H1 (cell line): ENCODE measurements at regions of chr17 and their contacts with region 1.

Region 1: GRCh38 chr17:49997791-49998703 is 3.0 kb upstream of the DLX3 start:
- DNase-seq: peak; percentile 58 to 91
- H3K4me3 ChIP-seq: no peak overlapping the region
- H3K27ac ChIP-seq: no peak overlapping the region
- H3K4me1 ChIP-seq: peaks cover 3 to 29% (median 11%) of the 10 kb centered on the region in 4 experiments; a peak in 6 of 7 replicates
- H3K27me3 ChIP-seq: peaks cover 32 to 66% (median 52%) of the 10 kb centered on the region in 4 experiments
- CTCF ChIP-seq: peak; percentile 72 to 94 (median 92)
- EP300 ChIP-seq: no peak
- POLR2A ChIP-seq: no peak
- RAD21 ChIP-seq: peak; percentile 99

Region 2: DNA sequence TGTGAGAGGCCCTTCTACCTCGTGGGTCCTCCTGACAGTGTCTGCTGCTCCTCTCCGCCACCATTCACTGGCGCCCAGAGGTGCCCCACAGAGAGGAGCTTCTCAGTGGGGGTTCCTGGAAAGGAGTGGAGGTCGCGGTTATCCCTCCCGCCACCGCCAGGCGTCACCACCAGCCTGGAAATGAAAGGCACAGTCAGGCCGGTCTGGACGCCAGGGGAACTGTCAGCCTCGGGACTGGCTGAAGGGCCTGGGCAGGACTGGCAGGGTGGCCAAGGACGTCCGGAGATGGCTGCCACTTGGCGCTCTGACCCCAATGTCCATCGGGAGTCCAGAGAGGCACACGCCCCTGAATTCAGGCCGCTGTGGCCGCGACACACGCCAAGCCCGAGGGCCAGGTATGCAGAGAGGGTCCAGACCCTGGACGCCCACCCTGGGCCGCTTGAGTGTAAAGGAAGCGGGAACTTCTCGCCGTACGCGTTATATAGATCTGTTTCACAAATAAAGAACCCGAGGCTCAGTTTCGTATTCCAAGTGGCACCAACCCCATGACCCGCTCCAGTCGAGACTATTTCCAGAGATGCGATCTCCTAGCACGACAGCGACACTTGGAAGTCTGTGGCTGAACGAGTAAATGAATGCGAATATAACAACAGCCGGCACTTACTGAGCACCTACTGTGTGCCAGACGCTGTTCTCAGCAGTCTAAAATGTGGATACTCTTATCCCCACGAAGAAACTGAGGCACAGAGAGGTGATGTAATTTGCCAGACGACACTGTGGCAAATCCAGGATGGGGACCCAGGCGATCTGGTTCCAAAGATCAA is 430.0 kb before region 1 on chr17:
- CTCF ChIA-PET with region 1: interaction called, 14 read pairs
- POLR2A ChIA-PET with region 1: no interaction called
- DNase-seq: peak in 1 of 2 experiments; percentile 96
- H3K4me3 ChIP-seq: peak overlapping the region in 2 of 4 experiments; percentile 11 to 51; a peak in 4 of 8 replicates
- H3K27ac ChIP-seq: no peak overlapping the region
- H3K4me1 ChIP-seq: peaks cover 0 to 9% (median 2%) of the 10 kb centered on the region in 4 experiments; a peak in 3 of 7 replicates
- H3K27me3 ChIP-seq: peaks cover 0 to 5% (median 2%) of the 10 kb centered on the region in 4 experiments; a peak in 4 of 7 replicates
- CTCF ChIP-seq: peak; percentile 87 to 98 (median 90)
- EP300 ChIP-seq: no peak
- POLR2A ChIP-seq: no peak
- RAD21 ChIP-seq: peak; percentile 97 to 99

Region 3: GRCh38 chr17:49861150-49861892 is 136.7 kb before region 1 on chr17:
- CTCF ChIA-PET with region 1: interaction called, 547 read pairs
- POLR2A ChIA-PET with region 1: interaction called, 28 read pairs
- DNase-seq: peak in 1 of 2 experiments; percentile 77
- H3K4me3 ChIP-seq: 0 out of 8 replicates have a peak overlapping the region, but pooled peaks of 1 of the 4 experiments have one; percentile 10
- H3K27ac ChIP-seq: no peak overlapping the region
- H3K4me1 ChIP-seq: peaks cover 0 to 29% (median 19%) of the 10 kb centered on the region in 4 experiments; a peak in 6 of 7 replicates
- H3K27me3 ChIP-seq: peaks cover 0 to 3% (median under 1%) of the 10 kb centered on the region in 4 experiments; a peak in 3 of 7 replicates
- CTCF ChIP-seq: peak; percentile 75 to 89 (median 81)
- EP300 ChIP-seq: no peak
- POLR2A ChIP-seq: no peak
- RAD21 ChIP-seq: peak; percentile 97

Region 4: DNA sequence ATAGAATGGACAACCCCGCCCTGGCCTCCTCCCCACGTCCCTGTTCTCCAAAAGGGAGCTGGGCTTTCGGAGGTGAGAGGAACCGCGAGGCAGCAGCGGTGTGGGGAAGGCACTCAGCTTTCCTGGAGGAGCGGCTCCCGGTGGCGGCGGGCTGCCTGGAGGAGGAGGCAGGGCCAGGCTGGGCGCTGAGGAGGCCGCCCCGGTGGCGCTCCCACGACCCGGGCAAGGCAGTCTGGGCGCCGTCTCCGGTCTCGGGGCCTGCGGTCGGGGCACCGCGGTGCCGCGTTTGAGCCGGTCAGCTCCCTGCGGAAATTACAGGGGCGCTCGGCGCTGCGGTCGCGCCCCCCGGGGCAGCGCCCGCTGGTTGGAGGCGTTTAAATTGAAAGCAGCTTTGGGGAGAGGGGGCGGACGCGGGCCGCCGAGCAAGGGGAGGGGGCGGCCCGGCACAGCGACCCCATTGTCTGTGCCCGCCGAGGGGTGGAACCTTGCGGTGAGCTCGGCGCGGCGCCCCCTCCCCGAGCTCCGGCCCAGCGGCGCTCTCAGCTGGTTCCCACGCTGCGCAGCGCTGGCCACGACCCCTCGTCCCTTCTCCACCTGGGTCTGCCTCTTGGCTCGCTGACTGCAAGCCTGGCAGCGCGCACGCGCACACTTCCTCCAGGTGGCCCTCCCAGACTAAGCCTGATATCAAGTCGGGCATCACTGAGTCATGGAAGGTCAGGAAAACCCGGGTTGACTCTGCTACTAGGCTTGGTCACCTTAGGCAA is 87.8 kb before region 1 on chr17:
- CTCF ChIA-PET with region 1: interaction called, 156 read pairs
- POLR2A ChIA-PET with region 1: interaction called, 14 read pairs
- DNase-seq: peak in 1 of 2 experiments; percentile 82
- H3K4me3 ChIP-seq: peak overlapping the region; percentile 42 to 69 (median 60)
- H3K27ac ChIP-seq: no peak overlapping the region
- H3K4me1 ChIP-seq: peaks cover 1 to 24% (median 17%) of the 10 kb centered on the region in 4 experiments
- H3K27me3 ChIP-seq: peaks cover 12 to 72% (median 66%) of the 10 kb centered on the region in 4 experiments
- CTCF ChIP-seq: no peak
- EP300 ChIP-seq: no peak
- POLR2A ChIP-seq: no peak
- RAD21 ChIP-seq: no peak

Region 5: DNA sequence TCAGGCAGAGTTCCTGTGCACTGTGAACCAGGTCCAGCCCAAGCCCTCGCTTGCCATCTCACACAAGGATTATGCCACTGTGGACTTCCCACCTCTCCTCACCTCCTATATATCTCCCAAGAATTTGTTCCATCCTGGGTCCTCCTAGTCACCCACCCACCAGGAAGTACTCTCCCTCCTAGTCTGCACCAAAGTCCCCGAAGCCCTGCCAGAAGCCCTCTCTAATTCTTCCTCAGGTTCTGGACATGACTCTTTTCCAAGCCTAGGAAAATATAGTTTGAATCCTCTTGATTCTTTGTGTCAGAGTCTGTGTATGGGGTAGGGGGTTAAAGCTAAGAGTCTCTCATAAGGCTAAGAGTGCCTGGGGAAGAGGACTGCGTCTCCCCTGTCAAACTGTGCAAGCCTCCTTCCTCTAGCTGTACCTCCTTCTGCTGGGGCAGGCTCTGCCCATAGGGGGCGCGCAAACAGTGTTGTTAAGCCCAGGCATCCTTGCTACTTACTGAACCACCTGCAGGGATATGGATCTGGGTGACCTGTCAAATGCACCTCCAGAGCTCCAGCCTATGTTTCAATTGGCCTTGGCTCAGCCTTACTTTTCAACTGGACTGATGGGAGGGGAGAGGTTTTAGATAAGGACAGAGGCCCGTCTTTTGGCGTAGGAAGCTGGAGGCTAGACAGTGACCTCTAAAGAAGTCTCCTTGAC is 45.7 kb before region 1 on chr17:
- CTCF ChIA-PET with region 1: interaction called, 275 read pairs
- POLR2A ChIA-PET with region 1: interaction called, 8 read pairs
- DNase-seq: peak; percentile 50 to 97
- H3K4me3 ChIP-seq: no peak overlapping the region
- H3K27ac ChIP-seq: no peak overlapping the region
- H3K4me1 ChIP-seq: no peaks in the 10 kb centered on the region
- H3K27me3 ChIP-seq: peaks cover 0 to 6% (median 2%) of the 10 kb centered on the region in 4 experiments; a peak in 2 of 7 replicates
- CTCF ChIP-seq: peak; percentile 94 to 99 (median 97)
- EP300 ChIP-seq: no peak
- POLR2A ChIP-seq: no peak
- RAD21 ChIP-seq: peak; percentile 81 to 88

Region 6: GRCh38 chr17:50020841-50021599 is 23.0 kb after region 1 on chr17:
- CTCF ChIA-PET with region 1: interaction called, 16 read pairs
- POLR2A ChIA-PET with region 1: no interaction called
- DNase-seq: no peak
- H3K4me3 ChIP-seq: no peak overlapping the region
- H3K27ac ChIP-seq: no peak overlapping the region
- H3K4me1 ChIP-seq: no peaks in the 10 kb centered on the region
- H3K27me3 ChIP-seq: no peaks in the 10 kb centered on the region
- CTCF ChIP-seq: no peak
- EP300 ChIP-seq: no peak
- POLR2A ChIP-seq: no peak
- RAD21 ChIP-seq: no peak

Region 7: GRCh38 chr17:50200457-50201275 is 202.6 kb after region 1 on chr17:
- CTCF ChIA-PET with region 1: no interaction called
- POLR2A ChIA-PET with region 1: no interaction called
- DNase-seq: peak; percentile 84 to 96
- H3K4me3 ChIP-seq: peak overlapping the region; percentile 49 to 72 (median 60)
- H3K27ac ChIP-seq: no peak overlapping the region
- H3K4me1 ChIP-seq: peaks cover 0 to 5% (median 1%) of the 10 kb centered on the region in 4 experiments; a peak in 5 of 7 replicates
- H3K27me3 ChIP-seq: peaks cover 0 to 29% (median 14%) of the 10 kb centered on the region in 4 experiments; a peak in 5 of 7 replicates
- CTCF ChIP-seq: peak; percentile 76 to 85 (median 85)
- EP300 ChIP-seq: no peak
- POLR2A ChIP-seq: no peak
- RAD21 ChIP-seq: peak; percentile 89 to 90